ENCODE measurements at regions of chr2 and their contacts with region 1.

Region 1: GRCh38 chr2:206442833-206443734 is at the start of gene ADAM23:
- DNase-seq: peak; percentile 74
- ATAC-seq: peak; percentile 83
- total RNA-seq, gene ADAM23: 69.1 TPM

Region 2: DNA sequence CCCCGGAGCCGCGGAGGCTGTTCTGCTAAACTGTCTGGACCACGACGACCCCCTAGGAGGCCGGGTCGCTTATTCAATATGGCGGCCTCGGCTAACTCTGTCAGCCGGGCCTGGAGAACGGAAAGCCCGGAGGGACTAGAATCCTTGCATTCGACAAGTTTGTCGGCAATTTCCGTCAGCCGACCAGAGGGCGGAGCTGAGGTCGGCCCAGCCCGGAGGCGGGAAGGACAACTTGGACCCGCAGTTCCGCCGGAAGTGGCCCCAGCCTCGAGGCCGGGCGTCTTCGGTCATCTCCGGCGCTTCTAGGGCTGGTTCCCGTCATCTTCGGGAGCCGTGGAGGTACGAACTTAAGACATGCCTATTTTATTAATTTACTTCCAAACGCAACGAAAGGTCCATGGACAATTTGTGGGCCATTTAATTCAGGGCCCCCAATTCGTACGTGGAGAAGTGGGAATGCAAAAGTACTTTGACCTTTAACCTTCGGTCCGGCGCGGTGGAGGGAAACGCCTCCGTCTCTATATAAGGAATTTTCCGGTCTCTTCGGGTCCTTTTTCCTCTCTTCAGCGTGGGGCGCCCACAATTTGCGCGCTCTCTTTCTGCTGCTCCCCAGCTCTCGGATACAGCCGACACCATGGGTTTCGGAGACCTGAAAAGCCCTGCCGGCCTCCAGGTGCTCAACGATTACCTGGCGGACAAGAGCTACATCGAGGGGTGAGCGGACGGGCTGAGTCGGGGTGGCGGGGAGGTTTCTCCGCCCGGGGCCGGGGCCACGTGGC is 283.5 kb before region 1 on chr2 and contains the starts of genes EEF1B2 and NDUFS1:
- intact Hi-C with region 1: loop called (anchors 5 kb)
- DNase-seq: peak; percentile 99
- ATAC-seq: peak; percentile 97
- total RNA-seq, gene EEF1B2: 283 TPM
- total RNA-seq, gene NDUFS1: 468 TPM

Region 3: GRCh38 chr2:206392118-206392517 is 51.0 kb before region 1 on chr2:
- intact Hi-C with region 1: loop called (anchors 5 kb)
- DNase-seq: no peak
- ATAC-seq: no peak

Region 4: GRCh38 chr2:206480161-206480560 is 37.1 kb after region 1 on chr2:
- intact Hi-C with region 1: loop called (anchors 5 kb)
- DNase-seq: no peak
- ATAC-seq: no peak

Region 5: GRCh38 chr2:206518997-206519396 is 75.9 kb after region 1 on chr2:
- intact Hi-C with region 1: loop called (anchors 5 kb)
- DNase-seq: no peak
- ATAC-seq: no peak

Region 6: DNA sequence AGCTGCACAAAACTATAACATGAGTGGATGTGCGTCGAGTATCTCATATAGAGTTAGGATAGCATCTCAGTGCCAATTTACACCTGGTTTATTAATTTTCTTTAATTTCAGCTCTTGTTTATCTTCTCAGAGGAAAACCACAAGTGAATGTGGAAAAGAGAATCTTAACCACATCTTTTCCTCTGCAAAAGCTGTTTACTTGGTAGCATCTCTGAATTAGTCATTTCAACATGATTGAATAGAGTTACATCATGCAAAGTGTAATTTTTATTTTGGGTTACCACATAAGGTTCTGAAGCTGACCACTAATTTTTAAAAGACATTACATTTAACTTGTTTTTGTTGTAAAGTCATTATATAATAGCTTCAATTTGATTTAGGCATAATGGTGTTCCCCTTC is 115.4 kb after region 1 on chr2:
- intact Hi-C with region 1: loop called (anchors 2 kb)
- DNase-seq: no peak
- ATAC-seq: no peak

Region 7: DNA sequence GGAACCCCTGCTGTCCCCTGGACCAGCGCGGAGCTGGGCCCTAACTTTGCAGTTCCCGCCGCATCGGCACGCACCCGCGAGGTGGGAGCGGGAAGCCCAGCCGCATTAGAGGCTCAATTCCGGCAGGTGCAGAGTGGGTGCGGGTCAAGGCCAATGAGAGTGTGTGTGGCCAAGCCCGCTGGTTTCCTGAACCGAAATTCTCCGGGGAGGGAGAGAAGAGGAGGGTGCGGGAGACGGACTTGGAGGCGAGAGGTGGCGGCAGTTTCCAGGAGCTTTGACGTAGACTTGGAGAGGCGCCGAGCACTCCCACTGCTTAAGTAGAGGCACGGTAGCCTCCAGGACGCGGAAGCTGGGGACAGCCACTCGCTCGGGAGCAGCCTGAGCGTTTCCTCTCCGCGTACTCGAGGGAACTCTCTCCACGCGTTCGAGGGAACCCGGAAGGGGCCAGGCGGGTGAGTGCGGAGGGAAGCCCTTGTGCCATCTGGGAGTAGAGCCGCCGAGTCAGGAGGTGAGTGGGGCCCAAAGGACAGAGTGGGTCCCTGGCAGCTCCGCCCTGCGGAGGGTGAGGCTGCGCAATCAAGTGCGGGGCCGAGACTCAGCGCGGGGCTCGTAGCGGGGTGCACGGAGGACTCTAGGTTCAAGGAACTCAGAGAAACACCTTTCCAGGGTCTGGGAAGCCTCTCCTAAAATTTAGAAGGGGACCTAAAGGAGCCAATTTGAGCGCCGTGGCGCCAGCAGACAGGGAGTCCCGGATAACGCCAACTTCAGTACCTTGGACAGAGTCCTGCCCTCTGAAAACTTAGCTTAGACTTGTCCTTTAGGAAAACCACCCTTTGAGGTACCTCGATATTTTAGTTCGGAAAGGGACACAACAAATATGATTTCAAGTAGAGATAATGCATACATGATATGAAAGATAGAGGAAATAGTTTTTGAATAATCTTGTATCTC is 199.3 kb after region 1 on chr2 and contains the start of gene FAM237A:
- intact Hi-C with region 1: no loop called
- DNase-seq: peak; percentile 67
- ATAC-seq: no peak
- total RNA-seq, gene FAM237A: 1.2 TPM

Measured in Right ventricle myocardium inferior (tissue), 1 donor.